Heart left ventricle (tissue), 16 donors: ENCODE measurements at regions of chr18 and their contacts with region 1.

Region 1: DNA sequence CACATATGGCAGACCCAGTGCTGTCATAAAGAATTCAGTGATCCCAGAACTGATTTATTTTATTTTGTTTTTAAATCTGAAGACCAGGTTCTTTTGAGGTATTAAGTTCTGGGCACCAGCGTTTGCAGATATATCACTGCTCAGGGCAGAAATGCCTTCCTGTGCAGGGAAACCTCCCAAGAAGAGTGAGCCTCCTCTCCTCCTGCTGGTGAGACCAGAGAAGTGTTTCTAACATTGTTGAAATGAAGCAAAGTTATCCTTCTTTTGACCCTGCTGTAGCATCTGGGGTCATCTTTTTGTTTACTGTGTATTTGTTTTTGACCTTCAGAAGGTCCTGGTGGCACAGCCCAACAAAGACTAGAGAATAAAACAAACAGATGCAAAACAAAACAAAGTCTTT is 94.0 kb downstream of the AQP4 start:
- DNase-seq: no peak
- ATAC-seq: peak in 2 of 4 donors; percentile 61 to 69
- H3K4me3 ChIP-seq: no peak overlapping the region
- H3K27ac ChIP-seq: no peak overlapping the region
- H3K4me1 ChIP-seq: no peaks in the 10 kb centered on the region
- H3K27me3 ChIP-seq: peaks cover 0 to 15% (median under 1%) of the 10 kb centered on the region in 9 donors
- CTCF ChIP-seq: peak; percentile 18 to 45 (median 36)
- POLR2A ChIP-seq: no peak

Region 2: DNA sequence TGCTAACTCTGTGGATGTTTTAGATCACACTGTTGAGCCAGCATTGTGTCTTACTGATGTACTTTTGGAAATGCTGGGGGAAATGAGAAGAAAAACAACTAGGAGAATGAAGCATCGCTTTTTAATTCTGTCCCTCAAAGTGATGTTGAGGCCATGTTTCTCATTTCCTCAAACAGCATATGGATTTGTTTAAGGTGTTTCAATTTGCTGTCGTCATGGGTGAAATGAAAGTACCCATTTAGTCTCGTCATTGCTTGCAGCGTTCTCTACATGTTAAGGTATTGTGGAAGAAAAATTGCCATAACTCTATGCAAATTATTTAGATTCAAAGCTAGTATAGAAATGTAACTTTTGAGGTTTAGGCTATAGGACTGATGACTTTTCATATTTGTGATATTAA is 374.5 kb before region 1 on chr18:
- intact Hi-C with region 1: loop called in 4 of 10 experiments (anchors 10 kb)
- DNase-seq: no peak
- ATAC-seq: no peak
- H3K4me3 ChIP-seq: no peak overlapping the region
- H3K27ac ChIP-seq: no peak overlapping the region
- H3K4me1 ChIP-seq: no peaks in the 10 kb centered on the region
- H3K27me3 ChIP-seq: no peaks in the 10 kb centered on the region
- CTCF ChIP-seq: no peak
- POLR2A ChIP-seq: no peak

Region 3: GRCh38 chr18:26621161-26622026 is 150.1 kb before region 1 on chr18:
- intact Hi-C with region 1: loop called in 8 of 10 experiments (anchors 2 to 10 kb)
- DNase-seq: peak in 3 of 5 donors; percentile 25 to 54 (median 33)
- ATAC-seq: peak in 3 of 4 donors; percentile 71 to 76 (median 75)
- H3K4me3 ChIP-seq: no peak overlapping the region
- H3K27ac ChIP-seq: no peak overlapping the region
- H3K4me1 ChIP-seq: peaks cover 0 to 2% (median 0%) of the 10 kb centered on the region in 12 donors
- H3K27me3 ChIP-seq: no peaks in the 10 kb centered on the region
- CTCF ChIP-seq: peak; percentile 49 to 70 (median 62)
- POLR2A ChIP-seq: no peak

Region 4: DNA sequence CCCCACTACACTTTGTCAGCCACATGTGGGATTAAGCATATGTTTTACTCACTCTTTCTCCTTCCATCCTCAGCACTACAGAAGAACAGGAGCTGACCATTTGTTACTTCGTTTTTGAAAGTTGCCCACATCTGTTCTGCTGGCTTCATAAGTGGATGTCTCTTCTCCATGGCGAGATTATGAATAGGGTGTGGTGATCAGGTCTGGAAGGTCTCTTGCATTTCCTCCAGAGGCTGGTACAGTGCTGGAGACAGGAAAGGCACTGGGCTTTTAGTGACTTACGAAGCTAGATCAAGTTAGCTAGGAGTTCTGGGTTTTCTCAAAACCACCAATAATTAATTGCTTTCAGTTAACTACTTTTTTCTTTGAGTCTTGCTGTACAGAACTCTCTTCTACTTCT is 42.5 kb before region 1 on chr18:
- intact Hi-C with region 1: loop called in 1 of 10 experiments (anchors 5 kb)
- DNase-seq: no peak
- ATAC-seq: no peak
- H3K4me3 ChIP-seq: no peak overlapping the region
- H3K27ac ChIP-seq: no peak overlapping the region
- H3K4me1 ChIP-seq: no peaks in the 10 kb centered on the region
- H3K27me3 ChIP-seq: peaks cover 0 to 3% (median 0%) of the 10 kb centered on the region in 9 donors
- CTCF ChIP-seq: no peak
- POLR2A ChIP-seq: no peak

Region 5: GRCh38 chr18:26948703-26949102 is 177.2 kb after region 1 on chr18:
- intact Hi-C with region 1: no loop called
- DNase-seq: no peak
- ATAC-seq: no peak
- H3K4me3 ChIP-seq: no peak overlapping the region
- H3K27ac ChIP-seq: no peak overlapping the region
- H3K4me1 ChIP-seq: no peaks in the 10 kb centered on the region
- H3K27me3 ChIP-seq: no peaks in the 10 kb centered on the region
- CTCF ChIP-seq: no peak
- POLR2A ChIP-seq: no peak